Endothelial cell of umbilical vein (primary cell): ENCODE measurements at regions of chr19 and their contacts with region 1.

Region 1: DNA sequence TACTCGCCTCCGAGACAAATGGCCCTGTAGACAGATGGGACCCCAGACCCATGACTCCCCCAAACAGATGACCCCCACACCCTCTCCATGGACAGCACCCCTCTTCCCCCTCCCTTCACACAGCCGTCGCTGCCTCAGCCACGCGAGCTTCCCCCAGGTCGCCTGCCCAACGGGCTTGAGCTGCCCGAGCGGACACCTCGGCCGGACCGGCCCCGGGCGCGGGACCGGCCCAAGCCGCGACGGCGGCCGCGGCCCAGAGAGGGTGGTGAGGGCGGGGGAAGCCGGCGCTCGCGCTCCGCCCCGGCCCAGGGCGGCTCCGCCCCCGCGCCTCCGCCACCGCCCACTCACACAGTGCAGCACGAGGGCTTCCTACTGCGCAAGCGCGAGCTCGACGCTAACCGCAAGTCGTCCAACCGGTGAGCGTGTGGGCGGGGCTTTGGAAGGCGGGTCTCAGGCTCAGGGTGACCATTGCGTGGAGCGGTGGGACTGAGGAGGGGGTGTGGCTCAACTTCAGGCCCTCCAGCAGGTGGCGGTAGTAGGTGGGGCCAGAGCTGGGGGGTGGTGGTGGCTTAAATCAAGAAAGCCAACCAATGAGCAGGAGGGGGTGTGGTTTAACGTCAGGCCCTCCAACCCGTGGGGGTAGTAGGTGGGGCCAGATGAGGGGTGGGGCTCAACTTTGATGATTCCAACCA is 6.2 kb upstream of the SHKBP1 start:
- DNase-seq: peak; percentile 99
- H3K4me3 ChIP-seq: peak overlapping the region in 1 of 3 experiments; percentile 32
- H3K27ac ChIP-seq: no peak overlapping the region
- H3K4me1 ChIP-seq: peaks cover 4% of the 10 kb centered on the region
- H3K27me3 ChIP-seq: peaks cover 22% of the 10 kb centered on the region in 2 experiments
- CTCF ChIP-seq: peak in 1 of 2 donors; percentile 36
- POLR2A ChIP-seq: no peak

Region 2: GRCh38 chr19:40433391-40434216 is 136.9 kb before region 1 on chr19:
- CTCF ChIA-PET with region 1: no interaction called
- POLR2A ChIA-PET with region 1: interaction called, 10 read pairs
- dilution Hi-C with region 1: no loop called
- intact Hi-C with region 1: no loop called
- DNase-seq: peak; percentile 89
- H3K4me3 ChIP-seq: peak overlapping the region; percentile 28 to 76 (median 33)
- H3K27ac ChIP-seq: peak overlapping the region; percentile 97
- H3K4me1 ChIP-seq: peaks cover 13% of the 10 kb centered on the region
- H3K27me3 ChIP-seq: no peaks in the 10 kb centered on the region
- CTCF ChIP-seq: no peak
- POLR2A ChIP-seq: peak; percentile 90

Region 3: DNA sequence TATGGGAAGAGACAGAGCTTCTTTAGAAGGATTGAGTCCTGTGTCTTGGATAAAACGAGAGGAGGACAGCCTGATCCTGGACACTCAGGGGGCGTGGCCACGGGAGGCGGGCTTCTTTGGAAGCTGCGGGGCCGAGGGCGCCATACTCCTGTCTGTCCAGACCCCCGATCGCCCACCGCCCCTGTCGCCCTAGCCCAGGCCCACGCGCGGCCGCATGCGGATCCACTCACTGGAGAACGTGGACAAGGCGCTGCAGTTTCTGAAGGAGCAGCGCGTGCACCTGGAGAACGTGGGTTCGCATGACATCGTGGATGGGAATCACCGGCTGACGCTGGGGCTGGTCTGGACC is 80.6 kb before region 1 on chr19:
- CTCF ChIA-PET with region 1: no interaction called
- POLR2A ChIA-PET with region 1: no interaction called
- dilution Hi-C with region 1: no loop called
- intact Hi-C with region 1: no loop called
- DNase-seq: no peak
- H3K4me3 ChIP-seq: no peak overlapping the region
- H3K27ac ChIP-seq: no peak overlapping the region
- H3K4me1 ChIP-seq: no peaks in the 10 kb centered on the region
- H3K27me3 ChIP-seq: peaks cover 0 to 3% of the 10 kb centered on the region in 2 experiments
- CTCF ChIP-seq: no peak
- POLR2A ChIP-seq: no peak